Cardiac septum (tissue), 1 donor: ENCODE measurements at regions of chr4 and their contacts with region 1.

Region 1: DNA sequence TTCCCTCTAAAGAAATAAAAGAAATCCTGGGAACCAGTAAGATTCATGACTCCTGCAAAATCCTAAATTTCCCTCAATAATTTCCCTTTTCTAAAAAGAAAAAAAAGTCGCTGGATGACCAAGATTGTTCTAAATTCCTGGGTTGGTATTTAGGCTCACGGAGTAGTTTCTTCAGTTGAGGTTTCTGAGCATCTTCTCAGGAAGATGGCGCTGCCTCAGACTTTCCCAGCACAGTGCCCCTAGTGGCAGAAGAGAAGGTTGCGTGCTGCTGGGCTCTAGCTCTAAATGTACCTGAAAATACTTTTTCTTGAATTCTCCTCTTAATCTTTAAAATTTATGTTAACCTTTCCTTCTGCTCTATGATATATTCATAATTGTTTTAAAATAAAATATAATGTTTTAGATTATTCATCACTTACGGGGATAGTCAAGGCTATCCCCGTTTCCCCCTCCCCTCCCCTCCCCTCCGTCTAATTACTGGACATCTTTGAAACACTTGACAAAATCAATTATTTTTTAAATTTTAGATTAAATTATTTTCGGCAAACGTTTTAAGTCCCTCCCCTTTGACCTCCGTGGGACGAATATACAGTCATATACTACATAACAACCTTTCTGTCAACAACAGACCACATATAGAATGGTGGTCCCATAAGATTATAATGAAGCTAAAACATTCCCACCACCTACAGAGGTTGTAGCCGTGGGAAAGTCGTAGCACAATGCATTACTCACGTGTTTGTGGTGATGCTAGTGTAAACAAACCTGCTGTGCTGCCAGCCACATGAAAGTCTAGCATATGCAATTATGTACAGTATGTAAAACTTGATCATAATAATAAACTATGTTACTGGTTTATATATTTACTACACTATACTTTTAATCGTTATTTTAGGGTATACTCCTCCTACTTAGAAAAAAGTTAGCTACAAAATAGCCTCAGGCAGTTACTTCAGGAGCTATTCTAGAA is 41.0 kb upstream of the GATB start:
- DNase-seq: no peak

Region 2: DNA sequence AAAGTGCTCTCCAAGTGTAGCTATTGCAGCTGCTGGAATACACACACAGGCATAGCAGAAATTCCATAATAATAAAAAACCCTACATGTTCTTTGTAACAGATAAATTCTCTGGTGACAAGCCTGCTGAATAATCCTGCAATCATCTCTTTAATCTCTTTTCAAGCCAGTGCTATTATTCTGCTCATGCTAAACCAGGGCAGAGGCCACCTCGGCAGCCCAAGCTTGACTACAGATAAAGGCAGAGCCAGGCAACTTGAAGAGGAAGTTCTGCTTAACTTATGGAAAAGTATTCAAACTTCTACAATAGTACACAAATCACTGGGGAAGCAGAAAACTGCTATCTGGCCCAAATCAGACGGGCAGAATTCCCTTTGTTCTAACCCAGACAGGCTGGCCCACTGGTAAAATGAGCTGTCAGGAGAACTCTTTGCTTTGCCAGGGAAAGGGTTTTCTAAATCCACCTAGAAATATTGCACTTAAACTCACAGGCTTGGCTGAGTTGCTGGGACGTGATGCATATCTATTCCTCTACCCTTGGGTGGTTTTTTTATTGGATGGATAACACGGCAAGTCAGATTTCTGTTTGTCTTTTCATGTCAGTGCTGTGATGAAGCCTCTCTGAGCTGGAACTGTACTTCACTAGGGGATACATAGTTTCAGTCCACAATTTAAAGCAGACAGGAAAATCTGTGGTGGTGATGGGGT is 111.5 kb before region 1 on chr4:
- intact Hi-C with region 1: loop called (anchors 5 kb)
- DNase-seq: no peak

Region 3: DNA sequence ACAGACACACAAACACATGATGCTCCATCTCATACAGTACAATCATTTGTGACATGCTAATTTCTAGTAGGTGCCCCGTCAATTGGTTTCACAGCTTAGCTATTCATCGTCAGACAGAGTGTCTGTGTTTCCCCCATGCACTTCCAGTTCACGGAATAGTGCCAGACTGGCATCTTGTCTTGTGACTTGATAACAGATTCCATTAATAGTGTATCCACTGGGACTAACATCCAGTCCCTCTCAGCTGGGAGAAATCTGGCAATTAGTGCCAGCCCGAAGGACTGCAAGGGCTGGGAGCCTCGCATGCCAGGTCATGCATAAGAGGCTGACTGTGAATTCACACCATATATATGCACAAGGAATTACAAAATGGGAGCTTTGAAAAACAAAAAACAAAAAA is 20.8 kb before region 1 on chr4:
- intact Hi-C with region 1: loop called (anchors 2 kb)
- DNase-seq: peak; percentile 77

Region 4: GRCh38 chr4:152079543-152080293 is 277.9 kb after region 1 on chr4:
- intact Hi-C with region 1: loop called (anchors 10 kb)
- DNase-seq: no peak